K562 (cell line): ENCODE measurements at regions of chr4 and their contacts with region 1.

Region 1: GRCh38 chr4:85147439-85148076 is 181.1 kb upstream of the WDFY3 start:
- DNase-seq: peak; percentile 18 to 62 (median 26)
- ATAC-seq: peak; percentile 89
- H3K4me3 ChIP-seq: no peak overlapping the region
- H3K27ac ChIP-seq: no peak overlapping the region
- H3K4me1 ChIP-seq: no peaks in the 10 kb centered on the region
- H3K27me3 ChIP-seq: no peaks in the 10 kb centered on the region
- CTCF ChIP-seq: peak; percentile 38 to 65 (median 63); a peak in 5 of 6 replicates
- EP300 ChIP-seq: no peak
- POLR2A ChIP-seq: no peak
- RAD21 ChIP-seq: peak; percentile 63 to 73

Region 2: DNA sequence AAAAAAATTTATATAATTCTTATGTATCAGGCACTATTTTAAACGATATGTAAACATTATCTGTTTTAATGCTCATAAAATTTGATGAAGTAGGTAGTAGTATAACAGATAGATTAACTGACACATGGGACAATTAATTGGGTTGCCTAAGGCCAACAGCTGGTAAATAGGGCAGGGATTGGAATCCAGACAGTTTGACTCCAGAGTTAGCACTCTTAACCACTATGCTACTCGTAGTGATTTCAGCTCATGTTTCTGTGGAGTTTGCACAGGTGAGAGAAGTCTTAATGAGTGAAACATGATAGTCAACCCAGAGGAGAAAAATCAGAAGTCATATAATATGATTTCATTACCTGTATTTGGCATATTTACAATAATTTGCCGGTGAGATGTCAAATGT is 55.0 kb before region 1 on chr4:
- CTCF ChIA-PET with region 1: no interaction called
- POLR2A ChIA-PET with region 1: no interaction called
- in situ Hi-C with region 1: no loop called
- intact Hi-C with region 1: no loop called
- DNase-seq: no peak
- ATAC-seq: no peak
- H3K4me3 ChIP-seq: no peak overlapping the region
- H3K27ac ChIP-seq: no peak overlapping the region
- H3K4me1 ChIP-seq: no peaks in the 10 kb centered on the region
- H3K27me3 ChIP-seq: no peaks in the 10 kb centered on the region
- CTCF ChIP-seq: no peak
- EP300 ChIP-seq: no peak
- POLR2A ChIP-seq: no peak
- RAD21 ChIP-seq: no peak

Region 3: GRCh38 chr4:85291226-85291625 is 143.7 kb after region 1 on chr4:
- CTCF ChIA-PET with region 1: no interaction called
- POLR2A ChIA-PET with region 1: no interaction called
- in situ Hi-C with region 1: no loop called
- intact Hi-C with region 1: no loop called
- DNase-seq: no peak
- ATAC-seq: no peak
- H3K4me3 ChIP-seq: no peak overlapping the region
- H3K27ac ChIP-seq: no peak overlapping the region
- H3K4me1 ChIP-seq: no peaks in the 10 kb centered on the region
- H3K27me3 ChIP-seq: no peaks in the 10 kb centered on the region
- CTCF ChIP-seq: no peak
- EP300 ChIP-seq: no peak
- POLR2A ChIP-seq: no peak
- RAD21 ChIP-seq: no peak

Region 4: DNA sequence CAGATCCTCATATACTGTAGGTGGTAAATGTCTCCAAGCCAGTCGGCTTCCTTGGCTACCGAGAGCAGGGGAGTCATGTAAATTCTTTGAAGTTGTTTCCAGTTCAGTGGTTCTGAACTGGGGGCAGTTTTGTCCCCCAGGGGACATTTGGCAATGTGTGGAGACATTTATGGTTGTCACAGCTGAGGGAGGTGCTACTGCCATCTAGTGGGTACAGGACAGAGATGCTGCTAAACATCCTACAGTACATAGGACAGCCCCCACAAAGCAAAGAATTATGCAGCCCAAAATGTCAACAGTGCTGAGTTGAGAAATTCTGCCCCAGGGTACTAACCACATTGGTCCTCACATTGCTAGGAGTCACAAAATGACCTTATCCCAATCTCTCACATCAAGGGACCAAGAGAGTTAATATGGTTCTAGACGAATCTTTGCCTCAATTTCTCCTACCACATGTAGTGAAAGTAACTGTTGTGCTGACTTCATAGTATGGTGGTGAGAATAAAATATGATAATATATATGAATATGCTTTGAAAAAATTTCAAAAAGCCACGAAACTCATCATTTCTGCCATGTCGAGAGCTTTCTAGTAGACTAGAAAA is 223.0 kb after region 1 on chr4:
- CTCF ChIA-PET with region 1: no interaction called
- POLR2A ChIA-PET with region 1: no interaction called
- in situ Hi-C with region 1: no loop called
- intact Hi-C with region 1: loop called (anchors 1 kb)
- DNase-seq: peak; percentile 9 to 51 (median 16)
- ATAC-seq: peak; percentile 90
- H3K4me3 ChIP-seq: no peak overlapping the region
- H3K27ac ChIP-seq: no peak overlapping the region
- H3K4me1 ChIP-seq: no peaks in the 10 kb centered on the region
- H3K27me3 ChIP-seq: no peaks in the 10 kb centered on the region
- CTCF ChIP-seq: peak; percentile 64 to 68 (median 68)
- EP300 ChIP-seq: no peak
- POLR2A ChIP-seq: no peak
- RAD21 ChIP-seq: peak; percentile 40 to 61; a peak in 3 of 4 replicates

Region 5: DNA sequence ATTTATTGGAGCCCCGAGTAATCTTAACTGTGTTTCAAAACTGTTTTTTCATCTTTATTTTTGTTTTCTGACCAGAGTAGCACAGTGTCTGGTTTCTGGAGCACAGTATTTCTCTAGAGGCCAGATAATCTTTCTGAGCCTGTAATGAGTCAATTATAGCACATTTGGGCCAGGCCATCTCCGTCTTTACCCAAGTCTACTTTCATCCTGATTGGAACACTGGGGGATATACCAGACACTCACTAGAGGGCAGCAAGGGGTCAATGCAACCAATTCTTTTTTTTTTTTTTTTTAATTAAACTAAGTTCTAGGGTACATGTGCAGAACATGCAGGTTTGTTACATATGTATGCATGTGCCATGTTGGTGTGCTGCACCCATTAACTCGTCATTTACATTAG is 609.4 kb after region 1 on chr4:
- CTCF ChIA-PET with region 1: no interaction called
- POLR2A ChIA-PET with region 1: no interaction called
- in situ Hi-C with region 1: loop called (anchors 25 kb)
- intact Hi-C with region 1: no loop called
- DNase-seq: peak; percentile 8 to 25 (median 10)
- ATAC-seq: peak; percentile 66; the same call in 2 of the 3 replicates
- H3K4me3 ChIP-seq: no peak overlapping the region
- H3K27ac ChIP-seq: no peak overlapping the region
- H3K4me1 ChIP-seq: no peaks in the 10 kb centered on the region
- H3K27me3 ChIP-seq: no peaks in the 10 kb centered on the region
- CTCF ChIP-seq: peak in 2 of 3 experiments; percentile 41 to 50; a peak in 3 of 6 replicates
- EP300 ChIP-seq: no peak
- POLR2A ChIP-seq: no peak
- RAD21 ChIP-seq: peak in 1 of 2 experiments; percentile 32; a peak in 2 of 4 replicates